Activated CD4-positive, alpha-beta memory T cell treated with anti-CD3 and anti-CD28 coated beads, Interleukin-2, amount 10 ng/mL, durations not matched to agents 7 days and 5 days (primary cell): ENCODE measurements at regions of chr16 and their contacts with region 1.

Region 1: DNA sequence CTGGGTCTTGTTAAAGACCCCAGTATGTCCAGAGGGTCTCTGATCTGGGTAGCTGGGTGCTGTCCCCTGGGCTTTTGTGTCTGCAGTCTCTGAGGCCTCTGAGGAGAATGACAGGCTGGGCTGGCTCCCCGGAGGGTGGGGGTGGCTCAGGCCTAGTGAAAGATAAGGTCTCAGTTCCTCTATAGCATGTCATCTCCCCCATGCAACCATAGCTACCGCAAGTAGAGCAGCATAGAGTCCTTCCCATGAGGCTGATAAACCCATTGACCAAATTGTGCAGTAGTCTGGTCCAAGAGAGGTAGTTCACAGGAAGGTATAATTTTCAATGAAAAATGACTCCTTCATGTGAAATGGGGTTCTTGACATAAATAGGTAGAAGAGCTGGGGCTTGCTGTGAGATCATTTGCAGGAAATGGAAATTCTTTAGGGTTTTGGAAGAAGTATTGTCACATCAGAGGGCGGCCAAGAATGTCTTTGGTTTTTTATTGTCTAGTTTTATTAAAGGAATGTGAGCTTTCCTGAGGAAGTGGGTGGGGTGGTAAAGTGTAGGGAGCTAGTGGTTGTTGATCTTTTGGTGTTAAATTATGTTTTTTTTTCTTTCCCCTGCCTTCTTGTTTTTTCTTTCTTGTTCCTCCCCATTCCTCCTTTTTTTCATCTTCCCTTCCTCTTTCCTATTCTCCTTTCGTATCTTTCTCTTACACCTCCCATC is 21.0 kb downstream of the SLC7A6OS start:
- DNase-seq: peak; percentile 71
- H3K4me3 Mint-ChIP-seq: peak overlapping the region; percentile 6
- H3K27ac Mint-ChIP-seq: peak overlapping the region; percentile 92
- H3K4me1 Mint-ChIP-seq: peaks cover 83% of the 10 kb centered on the region
- H3K27me3 Mint-ChIP-seq: no peaks in the 10 kb centered on the region

Region 2: DNA sequence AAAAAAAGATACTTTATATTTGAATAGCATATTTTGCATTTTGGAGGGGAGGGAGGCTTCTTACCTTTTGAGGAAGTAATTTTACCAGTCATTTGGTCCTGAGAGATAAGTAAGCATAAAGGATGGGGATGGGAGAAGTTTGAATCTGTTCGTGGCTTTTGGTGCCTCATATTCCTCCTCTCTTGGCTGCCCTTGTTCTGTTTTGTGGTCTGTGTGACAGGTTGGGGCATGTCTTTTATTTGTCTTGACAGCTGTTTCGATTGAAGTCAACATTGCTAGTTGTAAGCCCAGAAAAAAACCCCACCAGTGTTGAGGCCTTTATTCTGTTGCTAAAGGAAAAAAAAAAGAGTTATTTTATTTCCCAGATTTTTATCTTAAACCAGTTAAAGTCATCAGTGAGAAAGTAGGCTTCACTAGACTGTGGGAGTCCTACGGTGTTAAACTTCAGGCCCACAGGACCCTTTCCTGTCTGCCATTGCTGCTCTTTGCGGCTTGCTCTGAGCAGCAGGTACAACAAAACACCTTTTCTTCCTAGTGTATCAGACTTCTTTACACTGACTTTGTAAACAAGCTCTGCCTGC is 14.1 kb before region 1 on chr16:
- CTCF ChIA-PET with region 1: interaction called, 46 read pairs
- POLR2A ChIA-PET with region 1: interaction called, 28 read pairs
- DNase-seq: peak; percentile 45
- H3K4me3 Mint-ChIP-seq: peak overlapping the region; percentile 38
- H3K27ac Mint-ChIP-seq: peak overlapping the region; percentile 91
- H3K4me1 Mint-ChIP-seq: peaks cover 69% of the 10 kb centered on the region
- H3K27me3 Mint-ChIP-seq: no peaks in the 10 kb centered on the region